GM10248 (cell line): ENCODE measurements at regions of chr1 and their contacts with region 1.

Region 1: DNA sequence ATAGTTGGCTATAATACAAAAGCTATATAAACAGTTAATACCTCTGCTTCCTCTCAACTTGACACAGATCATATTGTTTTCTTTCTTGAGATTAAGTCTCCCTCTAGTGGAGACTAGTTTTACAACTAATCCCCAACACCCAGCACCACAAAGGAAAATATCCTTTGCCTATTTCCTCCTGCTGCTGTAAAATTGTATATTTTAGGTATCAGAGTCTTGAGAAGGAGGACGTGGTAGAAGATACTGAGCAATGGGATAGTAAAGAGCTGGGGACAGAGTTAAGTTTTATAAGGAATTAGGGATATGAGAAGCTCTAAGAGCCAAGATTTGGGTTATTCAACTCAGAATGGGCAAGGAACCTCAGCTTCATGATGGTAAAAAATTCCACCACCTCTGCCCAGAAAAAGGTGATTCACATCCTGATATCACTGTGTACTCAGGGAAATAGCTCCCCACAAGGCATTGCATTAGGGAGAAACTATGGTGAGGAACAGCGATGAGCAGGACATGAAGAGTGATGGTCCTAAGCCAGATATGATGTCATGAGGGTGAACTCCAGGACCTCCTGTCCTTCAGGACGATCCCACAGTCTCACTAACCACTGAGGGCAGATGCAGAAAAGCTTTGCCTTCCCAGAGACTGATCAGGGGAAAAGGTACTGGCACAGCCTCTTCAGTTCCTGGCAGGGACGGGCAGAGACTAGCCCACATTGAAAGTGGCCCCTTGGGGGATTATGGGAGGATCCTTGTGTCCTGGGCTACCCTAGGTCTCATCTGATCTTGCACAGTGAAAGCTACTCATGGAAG is 14.7 kb upstream of the CFAP126 start:
- DNase-seq: peak; percentile 49
- CTCF ChIP-seq: peak; percentile 72

Region 2: GRCh38 chr1:161165742-161166668 is 216.4 kb before region 1 on chr1 and contains the start of gene PPOX:
- CTCF ChIA-PET with region 1: interaction called, 18 read pairs
- POLR2A ChIA-PET with region 1: no interaction called
- DNase-seq: peak; percentile 92
- CTCF ChIP-seq: peak; percentile 58

Region 3: GRCh38 chr1:161192476-161193465 is 189.6 kb before region 1 on chr1:
- CTCF ChIA-PET with region 1: interaction called, 64 read pairs
- POLR2A ChIA-PET with region 1: no interaction called
- DNase-seq: peak; percentile 83
- CTCF ChIP-seq: peak; percentile 94

Region 4: DNA sequence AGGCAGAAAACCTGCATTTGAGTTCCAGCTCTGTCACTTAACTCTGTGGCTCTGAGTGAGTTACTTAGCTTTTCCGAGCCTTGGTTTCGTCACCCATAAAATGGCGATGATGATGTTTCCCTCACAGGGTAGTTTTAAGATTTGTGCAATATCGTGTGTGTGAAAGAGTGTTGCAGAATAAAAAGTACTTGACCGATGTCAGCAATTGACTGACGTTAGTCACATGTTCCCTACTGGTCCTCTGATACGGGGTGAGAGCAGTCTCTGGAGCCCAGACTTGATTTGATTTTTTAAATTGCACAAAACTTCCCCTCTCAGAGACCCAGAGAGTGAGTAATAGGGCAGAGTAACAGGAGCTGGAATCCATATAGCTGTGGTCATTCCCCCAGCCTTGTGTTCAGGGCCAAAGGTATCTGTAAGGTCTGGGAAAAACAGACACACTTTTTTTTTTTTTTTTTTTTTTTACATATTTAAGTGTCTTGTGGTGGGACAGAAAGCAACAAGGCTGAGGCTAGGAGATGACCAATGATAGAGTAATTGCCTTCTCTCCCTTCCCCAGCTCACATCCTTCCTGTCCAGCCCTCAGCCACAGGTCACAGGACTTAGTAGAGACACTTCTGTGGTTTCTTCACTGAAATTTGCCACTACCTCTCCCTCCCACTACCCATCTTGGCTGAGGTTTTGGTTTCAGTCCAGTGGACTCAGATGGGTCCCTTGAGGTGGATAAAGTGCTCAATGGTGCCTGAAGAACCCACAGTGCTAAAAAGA is 165.3 kb before region 1 on chr1:
- CTCF ChIA-PET with region 1: interaction called, 195 read pairs
- POLR2A ChIA-PET with region 1: no interaction called
- DNase-seq: peak; percentile 63
- CTCF ChIP-seq: no peak

Region 5: GRCh38 chr1:161324020-161324419 is 58.4 kb before region 1 on chr1:
- CTCF ChIA-PET with region 1: interaction called, 11 read pairs
- POLR2A ChIA-PET with region 1: no interaction called
- DNase-seq: no peak
- CTCF ChIP-seq: no peak

Region 6: GRCh38 chr1:161367684-161368400 is 14.6 kb before region 1 on chr1 and contains the start of gene CFAP126:
- CTCF ChIA-PET with region 1: interaction called, 81 read pairs
- POLR2A ChIA-PET with region 1: no interaction called
- DNase-seq: peak; percentile 82
- CTCF ChIP-seq: peak; percentile 24